ENCODE measurements at regions of chr2 and their contacts with region 1.

Region 1: DNA sequence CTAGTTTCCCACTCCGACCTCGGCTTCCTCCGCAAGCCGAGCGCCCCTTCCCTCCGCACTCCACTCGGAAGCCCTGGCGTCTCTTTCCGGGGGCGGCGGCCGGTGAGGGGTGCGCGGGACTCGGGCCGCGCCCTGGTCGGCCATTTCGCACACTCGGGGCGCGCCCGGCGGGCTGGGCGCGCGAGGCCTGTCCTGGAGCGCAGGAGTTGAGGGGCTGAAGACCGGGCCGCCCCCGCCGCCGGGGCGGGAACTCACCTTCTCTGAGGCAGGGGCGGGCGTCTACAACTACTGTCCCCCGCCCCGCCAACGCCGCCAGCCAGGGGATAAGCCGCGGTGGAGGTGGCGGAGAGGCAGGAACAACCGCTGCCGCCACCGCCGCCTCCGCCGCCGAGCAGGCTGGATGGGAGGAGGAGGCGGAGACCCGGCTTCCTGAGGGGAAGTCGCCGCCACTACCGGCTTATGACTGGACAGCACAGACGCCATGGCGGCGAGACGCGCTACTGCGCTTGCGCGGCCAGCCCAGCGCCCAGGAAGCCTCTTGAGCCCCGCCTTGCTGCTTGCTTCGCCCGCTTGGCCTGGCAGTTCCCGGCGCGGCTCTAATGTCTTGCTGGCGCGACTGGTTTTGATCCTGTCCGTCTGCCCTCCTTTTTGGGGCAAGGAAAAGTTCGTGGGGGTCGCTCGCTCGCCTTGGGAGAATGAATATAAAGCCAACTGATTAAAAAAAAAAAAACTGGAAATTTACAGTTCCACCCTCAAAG is at the start of gene KRCC1:
- DNase-seq: peak; percentile 82
- H3K4me3 ChIP-seq: peak within 1 kb of the TSS; percentile 63
- H3K27me3 ChIP-seq: no peaks in the 10 kb centered on the region
- CTCF ChIP-seq: no peak
- polyA plus RNA-seq, gene KRCC1: 16.8 and 33.7 TPM in 2 replicates

Region 2: DNA sequence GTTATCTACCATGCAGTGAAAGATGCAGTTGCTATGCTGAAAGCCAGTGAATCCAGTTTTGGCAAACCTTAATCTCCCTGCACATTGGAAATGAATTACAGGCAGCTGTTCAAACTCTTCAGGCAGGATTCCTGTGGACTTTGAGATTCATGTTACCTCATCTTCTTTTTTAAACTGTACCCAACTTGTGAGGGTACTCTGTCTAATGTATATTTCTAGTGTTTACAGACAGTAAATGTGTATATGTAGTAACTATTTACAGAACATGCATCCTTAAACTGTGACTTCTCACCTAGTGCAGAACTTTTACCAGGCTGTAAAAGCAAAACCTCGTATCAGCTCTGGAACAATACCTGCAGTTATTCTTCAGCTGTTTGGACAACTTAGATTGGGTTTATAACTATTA is 1563.5 kb before region 1 on chr2:
- CTCF ChIA-PET with region 1: no interaction called
- POLR2A ChIA-PET with region 1: no interaction called
- DNase-seq: no peak
- H3K4me3 ChIP-seq: no peak overlapping the region
- H3K27me3 ChIP-seq: no peaks in the 10 kb centered on the region
- CTCF ChIP-seq: no peak

Region 3: DNA sequence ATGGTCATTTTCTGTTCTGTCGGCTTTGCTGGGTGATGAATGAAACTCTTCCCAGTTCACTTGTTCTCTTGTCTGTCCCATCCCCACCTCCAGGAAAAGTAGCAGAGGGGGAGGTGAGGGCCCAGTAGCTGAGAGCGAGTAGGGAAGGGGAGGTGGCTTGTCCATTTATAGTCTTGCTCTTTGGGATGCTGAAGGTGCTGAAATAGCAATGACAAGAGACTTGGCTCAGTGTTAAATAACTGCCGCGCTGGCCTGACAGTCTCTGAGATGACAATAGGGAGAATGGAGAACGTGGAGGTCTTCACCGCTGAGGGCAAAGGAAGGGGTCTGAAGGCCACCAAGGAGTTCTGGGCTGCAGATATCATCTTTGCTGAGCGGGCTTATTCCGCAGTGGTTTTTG is 12.0 kb after region 1 on chr2 and contains the start of gene SMYD1:
- CTCF ChIA-PET with region 1: interaction called, 26 read pairs
- POLR2A ChIA-PET with region 1: no interaction called
- DNase-seq: no peak
- H3K4me3 ChIP-seq: no peak within 1 kb of the TSS
- H3K27me3 ChIP-seq: peaks cover 9% of the 10 kb centered on the region
- CTCF ChIP-seq: no peak
- polyA plus RNA-seq, gene SMYD1: not detected in 2 replicates

Region 4: DNA sequence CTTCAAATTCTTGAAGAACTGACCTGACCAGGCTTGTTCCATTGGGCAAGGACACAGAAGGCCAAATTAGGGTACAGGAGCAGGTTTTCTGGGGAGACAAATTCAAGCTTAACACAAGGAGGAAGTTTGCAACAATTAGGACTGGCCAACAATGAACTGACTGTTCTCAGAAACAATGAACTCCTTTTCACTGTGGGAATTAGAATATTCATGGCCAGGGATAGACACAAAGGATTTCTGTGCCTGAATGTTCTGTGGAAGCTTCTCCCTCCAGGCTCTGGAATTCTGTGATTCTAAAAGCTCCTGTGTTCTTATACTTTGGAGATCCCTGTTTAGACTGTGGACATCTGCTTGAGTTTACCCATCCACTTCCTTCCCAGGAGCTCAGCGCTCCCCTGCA is 27.2 kb after region 1 on chr2:
- CTCF ChIA-PET with region 1: interaction called, 21 read pairs
- POLR2A ChIA-PET with region 1: no interaction called
- DNase-seq: no peak
- H3K4me3 ChIP-seq: no peak overlapping the region
- H3K27me3 ChIP-seq: peaks cover 6% of the 10 kb centered on the region; the same call in 1 of the 2 replicates
- CTCF ChIP-seq: no peak

Region 5: DNA sequence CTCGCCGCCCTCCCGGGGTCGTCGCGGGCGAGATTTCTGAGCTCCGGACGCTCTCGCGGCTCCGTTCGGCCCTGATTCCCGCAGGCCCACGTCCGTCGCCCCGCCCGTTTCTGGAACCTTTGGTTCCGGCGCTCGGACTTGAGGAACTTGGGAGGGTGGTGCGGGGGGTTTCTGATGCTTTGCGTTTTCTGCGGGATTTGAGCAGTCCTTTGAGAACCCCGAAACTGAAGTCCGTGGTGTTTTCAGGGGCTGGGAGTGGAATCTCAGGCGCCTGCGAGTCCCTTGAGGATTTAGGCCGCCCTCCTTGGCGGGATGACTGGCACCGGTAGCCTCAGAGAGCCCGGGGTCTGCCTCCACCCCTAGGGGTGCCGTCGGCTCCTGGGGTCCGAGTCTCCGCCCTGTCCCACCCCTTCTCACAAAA is 114.9 kb after region 1 on chr2:
- CTCF ChIA-PET with region 1: interaction called, 21 read pairs
- POLR2A ChIA-PET with region 1: interaction called, 3 read pairs
- DNase-seq: no peak
- H3K4me3 ChIP-seq: peak overlapping the region; percentile 57
- H3K27me3 ChIP-seq: no peaks in the 10 kb centered on the region
- CTCF ChIP-seq: peak; percentile 18; the same call in 1 of the 2 replicates

Region 6: DNA sequence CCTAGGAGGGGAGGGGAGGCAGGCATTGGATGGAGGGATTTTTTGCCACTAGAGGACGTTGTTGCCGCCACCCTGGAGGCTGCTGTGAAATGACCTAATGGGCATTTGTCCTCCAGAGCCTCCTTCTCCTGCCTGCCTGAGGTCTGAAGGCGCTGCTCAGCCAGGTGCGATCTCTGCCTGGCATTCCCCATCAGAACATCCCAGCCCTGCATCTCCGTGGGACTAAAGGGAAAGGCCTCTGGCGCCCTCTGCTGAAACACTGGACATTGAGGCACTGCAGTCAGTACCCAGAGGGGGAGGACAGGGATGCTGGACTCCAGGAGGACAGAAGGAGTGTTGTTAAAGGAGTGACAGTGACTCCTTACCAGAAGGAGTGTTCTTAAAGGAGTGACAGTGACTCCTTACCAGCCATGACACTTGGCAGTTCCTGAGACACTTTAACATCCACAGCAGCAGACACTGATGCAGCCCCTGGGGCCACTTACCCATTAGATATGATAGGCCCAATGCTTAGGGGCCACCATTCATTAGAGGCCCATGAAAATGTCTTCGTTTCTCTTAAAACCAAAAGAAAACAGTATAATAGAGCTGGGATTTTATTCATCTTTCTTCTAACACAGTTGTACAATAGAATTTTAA is 131.6 kb after region 1 on chr2:
- CTCF ChIA-PET with region 1: interaction called, 56 read pairs
- POLR2A ChIA-PET with region 1: no interaction called
- DNase-seq: no peak
- H3K4me3 ChIP-seq: no peak overlapping the region
- H3K27me3 ChIP-seq: no peaks in the 10 kb centered on the region
- CTCF ChIP-seq: peak; percentile 80